Activated CD4-positive, alpha-beta memory T cell treated with anti-CD3 and anti-CD28 coated beads for 36 hours (primary cell): ENCODE measurements at regions of chrX and their contacts with region 1.

Region 1: GRCh38 chrX:107654872-107655761 is 26.8 kb downstream of the PRPS1 start:
- DNase-seq: peak; percentile 73
- H3K4me3 Mint-ChIP-seq: no peak overlapping the region
- H3K27ac Mint-ChIP-seq: no peak overlapping the region
- H3K4me1 Mint-ChIP-seq: peaks cover 13% of the 10 kb centered on the region
- H3K27me3 Mint-ChIP-seq: no peaks in the 10 kb centered on the region

Region 2: GRCh38 chrX:107537815-107538214 is 117.3 kb before region 1 on chrX:
- CTCF ChIA-PET with region 1: interaction called, 4 read pairs
- POLR2A ChIA-PET with region 1: no interaction called
- intact Hi-C with region 1: loop called (anchors 10 kb)
- DNase-seq: peak; percentile 50
- H3K4me3 Mint-ChIP-seq: no peak overlapping the region
- H3K27ac Mint-ChIP-seq: no peak overlapping the region
- H3K4me1 Mint-ChIP-seq: no peaks in the 10 kb centered on the region
- H3K27me3 Mint-ChIP-seq: peaks cover 8% of the 10 kb centered on the region

Region 3: GRCh38 chrX:107599450-107599861 is 55.7 kb before region 1 on chrX:
- CTCF ChIA-PET with region 1: no interaction called
- POLR2A ChIA-PET with region 1: no interaction called
- intact Hi-C with region 1: no loop called
- DNase-seq: no peak
- H3K4me3 Mint-ChIP-seq: no peak overlapping the region
- H3K27ac Mint-ChIP-seq: no peak overlapping the region
- H3K4me1 Mint-ChIP-seq: no peaks in the 10 kb centered on the region
- H3K27me3 Mint-ChIP-seq: peaks cover 1% of the 10 kb centered on the region

Region 4: GRCh38 chrX:107700317-107700774 is 45.2 kb after region 1 on chrX:
- CTCF ChIA-PET with region 1: no interaction called
- POLR2A ChIA-PET with region 1: no interaction called
- intact Hi-C with region 1: no loop called
- DNase-seq: no peak
- H3K4me3 Mint-ChIP-seq: no peak overlapping the region
- H3K27ac Mint-ChIP-seq: no peak overlapping the region
- H3K4me1 Mint-ChIP-seq: peaks cover 14% of the 10 kb centered on the region
- H3K27me3 Mint-ChIP-seq: no peaks in the 10 kb centered on the region

Region 5: DNA sequence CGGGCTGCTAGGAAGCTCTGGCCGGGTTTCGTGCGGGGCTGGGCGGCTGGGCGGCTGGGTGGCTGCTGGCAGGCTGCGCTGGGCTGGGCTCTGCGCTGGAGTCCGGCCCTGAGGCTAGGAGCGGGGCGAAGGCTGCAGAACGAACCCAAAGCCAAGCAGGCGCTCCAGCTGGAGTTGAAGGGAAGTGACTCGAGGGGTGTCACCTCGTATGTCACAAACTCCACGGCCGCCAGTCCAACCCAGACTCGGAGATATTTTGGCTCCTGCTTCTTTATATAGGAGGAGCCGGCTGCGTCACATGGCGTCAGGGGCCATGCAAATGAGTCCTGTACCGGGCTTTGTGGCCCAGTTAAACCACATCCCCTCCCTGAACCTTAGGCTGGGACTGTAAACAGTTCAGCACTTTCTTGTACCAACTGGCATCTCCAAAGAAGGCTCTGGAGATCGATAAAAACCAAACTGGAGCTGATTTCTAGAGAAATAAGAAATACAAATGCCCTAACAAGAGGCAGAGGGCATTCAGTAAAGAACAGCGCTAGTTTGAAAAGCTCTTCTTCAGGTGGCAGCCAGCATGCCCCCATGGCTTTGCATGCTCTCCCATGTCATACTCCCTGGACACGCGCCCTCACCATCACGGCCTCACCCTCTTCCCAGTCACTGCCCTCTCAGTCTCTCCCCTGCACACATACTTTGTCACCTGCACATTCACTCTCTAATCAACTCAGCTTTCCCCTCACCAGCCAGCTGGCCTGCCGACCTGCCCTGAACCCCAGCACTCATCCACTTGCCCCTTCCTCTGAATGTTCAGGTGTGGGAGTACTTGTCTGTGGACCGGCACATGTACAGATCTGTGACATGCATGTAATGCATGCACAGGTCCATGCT is 61.9 kb after region 1 on chrX:
- CTCF ChIA-PET with region 1: interaction called, 24 read pairs
- POLR2A ChIA-PET with region 1: interaction called, 7 read pairs
- intact Hi-C with region 1: loop called (anchors 1 kb)
- DNase-seq: peak; percentile 91
- H3K4me3 Mint-ChIP-seq: peak overlapping the region; percentile 89
- H3K27ac Mint-ChIP-seq: peak overlapping the region; percentile 90
- H3K4me1 Mint-ChIP-seq: peaks cover 44% of the 10 kb centered on the region
- H3K27me3 Mint-ChIP-seq: no peaks in the 10 kb centered on the region

Region 6: DNA sequence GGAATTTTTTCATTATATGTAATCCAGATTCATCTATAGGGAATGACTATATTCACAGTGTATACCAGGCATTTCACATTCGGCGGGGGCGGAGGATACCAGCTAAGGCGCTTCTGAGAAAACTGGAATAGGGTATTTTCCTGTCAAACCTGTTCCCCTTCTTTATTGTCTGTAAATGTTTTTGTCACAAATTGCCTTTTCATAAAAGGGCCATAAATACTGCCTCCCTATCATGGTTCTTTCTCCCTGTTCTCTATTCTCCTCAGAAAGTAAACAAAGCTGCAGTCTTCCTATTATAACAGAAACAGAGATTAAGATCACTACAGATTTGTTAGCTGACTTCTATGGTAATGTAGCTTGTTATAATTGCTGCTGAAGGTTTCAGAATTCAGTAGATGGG is 202.7 kb after region 1 on chrX:
- CTCF ChIA-PET with region 1: no interaction called
- POLR2A ChIA-PET with region 1: no interaction called
- intact Hi-C with region 1: no loop called
- DNase-seq: no peak
- H3K4me3 Mint-ChIP-seq: no peak overlapping the region
- H3K27ac Mint-ChIP-seq: no peak overlapping the region
- H3K4me1 Mint-ChIP-seq: peaks cover 4% of the 10 kb centered on the region
- H3K27me3 Mint-ChIP-seq: no peaks in the 10 kb centered on the region

Region 7: DNA sequence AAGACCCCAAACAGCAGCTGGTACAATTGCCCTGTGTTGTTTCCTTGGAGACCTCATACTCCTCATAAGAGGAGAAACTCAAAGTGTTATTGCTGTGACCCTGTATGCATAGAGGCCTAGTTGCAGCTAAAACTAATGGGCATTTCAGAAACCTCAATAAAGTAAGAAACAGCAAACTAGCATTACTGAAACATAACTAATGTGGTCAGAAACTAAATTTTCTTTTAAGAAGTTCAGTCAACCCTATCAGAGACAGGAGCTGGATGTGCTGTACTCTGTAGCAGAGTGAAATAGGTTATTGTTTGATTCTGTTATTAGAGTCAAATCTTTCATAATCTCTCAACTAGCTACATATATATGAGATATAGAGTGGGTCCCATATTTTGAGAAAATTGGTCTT is 1338.8 kb after region 1 on chrX:
- CTCF ChIA-PET with region 1: no interaction called
- POLR2A ChIA-PET with region 1: no interaction called
- intact Hi-C with region 1: no loop called
- DNase-seq: no peak
- H3K4me3 Mint-ChIP-seq: no peak overlapping the region
- H3K27ac Mint-ChIP-seq: no peak overlapping the region
- H3K4me1 Mint-ChIP-seq: no peaks in the 10 kb centered on the region
- H3K27me3 Mint-ChIP-seq: no peaks in the 10 kb centered on the region